ENCODE measurements at regions of chr12 and their contacts with region 1.

Region 1: DNA sequence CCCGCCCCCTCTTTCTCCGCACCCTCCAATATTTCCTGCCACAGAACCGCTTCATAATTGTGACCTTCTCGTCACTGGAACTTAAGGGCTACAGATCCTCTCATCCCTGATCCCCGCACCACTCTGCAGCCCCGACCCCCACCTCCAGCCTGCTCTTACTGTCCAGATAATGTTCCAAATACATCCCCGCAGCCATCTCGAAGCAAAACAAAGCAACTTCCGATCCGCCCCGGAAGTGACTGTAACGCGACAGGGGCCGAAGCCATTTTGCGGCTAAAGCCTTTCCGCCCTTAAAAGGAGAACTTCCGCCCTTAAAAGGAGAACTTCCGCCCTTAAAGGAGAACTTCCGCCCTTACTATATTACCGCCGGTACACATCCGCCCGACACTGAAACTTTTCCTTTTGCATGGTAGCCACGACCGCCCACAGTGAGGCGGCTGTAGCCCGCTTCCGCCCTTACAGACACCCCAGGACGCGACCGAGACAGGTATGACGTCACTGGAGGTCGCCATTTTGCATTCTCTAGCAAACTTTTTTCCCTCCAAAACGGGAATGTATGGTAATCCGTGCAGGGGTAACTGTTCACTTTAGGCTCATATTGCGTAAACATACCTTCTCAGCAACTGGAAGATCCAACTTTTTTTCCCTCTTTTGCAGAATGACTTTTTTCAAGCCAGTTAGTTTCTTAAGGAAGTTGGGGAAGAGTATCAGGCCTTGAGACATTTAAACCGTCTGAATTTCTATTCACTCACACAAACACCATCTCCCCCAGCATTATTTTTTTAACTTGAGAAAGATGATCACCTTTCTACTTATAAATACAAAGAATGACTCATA is at the start of gene ING4:
- DNase-seq: peak; percentile 98 to 99
- H3K4me3 ChIP-seq: peak within 1 kb of the TSS; percentile 63
- H3K27ac ChIP-seq: peak within 1 kb of the TSS; percentile 58
- H3K4me1 ChIP-seq: peaks cover 8% of the 10 kb centered on the region
- H3K27me3 ChIP-seq: no peaks in the 10 kb centered on the region
- CTCF ChIP-seq: no peak
- total RNA-seq, gene ING4: 87.6 and 88.7 TPM in 2 replicates

Region 2: DNA sequence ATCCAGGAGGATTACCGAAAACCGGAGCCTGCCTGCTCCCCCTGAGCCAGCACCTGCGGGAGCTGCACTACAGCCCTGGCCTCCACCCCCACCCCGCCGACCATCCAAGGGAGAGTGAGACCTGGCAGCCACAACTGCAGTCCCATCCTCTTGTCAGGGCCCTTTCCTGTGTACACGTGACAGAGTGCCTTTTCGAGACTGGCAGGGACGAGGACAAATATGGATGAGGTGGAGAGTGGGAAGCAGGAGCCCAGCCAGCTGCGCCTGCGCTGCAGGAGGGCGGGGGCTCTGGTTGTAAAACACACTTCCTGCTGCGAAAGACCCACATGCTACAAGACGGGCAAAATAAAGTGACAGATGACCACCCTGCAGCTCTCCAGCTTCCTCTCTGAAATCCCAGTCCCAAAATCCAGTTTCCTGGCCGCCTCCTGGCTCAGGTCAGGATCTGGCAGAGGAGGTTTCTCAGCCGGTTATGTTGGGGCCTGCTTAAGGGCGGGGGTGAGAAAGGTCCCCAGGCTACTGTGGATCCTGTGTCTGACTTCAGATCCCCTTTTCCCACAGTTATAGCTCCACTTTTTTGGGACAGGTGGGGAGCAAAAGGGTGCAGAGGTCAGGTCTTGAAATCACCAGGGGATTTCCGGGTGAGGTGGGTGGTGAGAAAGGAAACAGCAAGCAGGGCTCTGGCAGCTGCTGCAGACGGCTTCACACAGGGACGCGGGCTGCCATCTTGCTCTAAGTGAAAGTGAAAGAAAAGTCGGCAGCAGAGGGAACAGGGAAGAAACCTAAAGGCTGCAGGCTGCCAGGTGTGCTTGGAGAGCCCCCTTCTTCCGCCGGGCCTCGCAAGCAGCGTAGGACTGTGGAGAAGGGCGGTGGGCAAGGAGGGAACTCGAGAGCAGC is 211.5 kb before region 1 on chr12 and contains the start of gene TAPBPL:
- CTCF ChIA-PET with region 1: no interaction called
- POLR2A ChIA-PET with region 1: no interaction called
- intact Hi-C with region 1: no loop called
- DNase-seq: peak; percentile 70 to 85
- H3K4me3 ChIP-seq: peak within 1 kb of the TSS; percentile 63
- H3K27ac ChIP-seq: peak within 1 kb of the TSS; percentile 52
- H3K4me1 ChIP-seq: peaks cover 13% of the 10 kb centered on the region
- H3K27me3 ChIP-seq: no peaks in the 10 kb centered on the region
- CTCF ChIP-seq: no peak
- total RNA-seq, gene TAPBPL: 26.0 and 27.8 TPM in 2 replicates

Region 3: GRCh38 chr12:6632026-6632983 is 30.8 kb before region 1 on chr12:
- CTCF ChIA-PET with region 1: no interaction called
- POLR2A ChIA-PET with region 1: interaction called, 3 read pairs
- intact Hi-C with region 1: loop called (anchors 1 kb)
- DNase-seq: peak in 1 of 2 experiments; percentile 17
- H3K4me3 ChIP-seq: no peak overlapping the region
- H3K27ac ChIP-seq: no peak overlapping the region
- H3K4me1 ChIP-seq: peaks cover 22% of the 10 kb centered on the region
- H3K27me3 ChIP-seq: no peaks in the 10 kb centered on the region
- CTCF ChIP-seq: no peak

Region 4: DNA sequence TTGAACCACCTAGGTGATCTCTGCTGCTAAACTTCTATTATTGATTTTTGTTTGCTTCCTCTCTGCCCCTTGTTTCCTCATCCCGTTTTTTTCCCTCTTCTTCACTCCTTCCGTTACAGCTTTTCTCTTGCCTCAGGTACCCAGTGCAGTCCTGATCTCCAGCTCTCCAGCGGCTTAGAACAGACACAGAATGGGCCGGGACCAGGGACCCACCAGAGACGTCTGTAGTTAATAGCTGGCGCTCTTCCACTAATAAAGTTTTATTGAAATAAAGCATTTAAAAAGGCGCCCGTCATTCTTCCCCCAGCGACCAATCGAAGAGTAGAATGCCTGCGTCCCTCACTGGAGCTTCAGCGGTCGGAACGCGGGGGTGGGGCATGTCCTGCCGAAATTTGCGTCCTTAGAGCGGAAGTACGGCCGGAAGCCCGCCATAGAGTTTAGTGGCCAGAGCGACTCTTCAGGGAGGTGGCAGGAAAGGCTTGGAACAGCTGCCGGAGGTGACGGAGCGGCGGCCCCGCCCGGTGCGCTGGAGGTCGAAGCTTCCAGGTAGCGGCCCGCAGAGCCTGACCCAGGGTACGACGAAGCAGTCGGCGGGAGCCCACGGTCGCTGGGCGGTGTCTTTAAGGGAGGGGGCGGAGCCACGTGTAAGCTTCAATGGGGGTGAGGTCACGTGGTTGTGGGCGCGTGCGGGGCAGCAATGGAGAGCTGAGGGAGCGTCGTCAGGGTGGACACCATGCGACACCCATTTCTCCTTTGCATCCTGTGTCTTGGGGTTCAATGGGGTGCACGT is 60.7 kb after region 1 on chr12 and contains the start of gene COPS7A:
- CTCF ChIA-PET with region 1: no interaction called
- POLR2A ChIA-PET with region 1: no interaction called
- intact Hi-C with region 1: loop called (anchors 1 kb)
- DNase-seq: peak; percentile 98 to 100
- H3K4me3 ChIP-seq: peak within 1 kb of the TSS; percentile 77
- H3K27ac ChIP-seq: peak within 1 kb of the TSS; percentile 60
- H3K4me1 ChIP-seq: peaks cover 19% of the 10 kb centered on the region
- H3K27me3 ChIP-seq: no peaks in the 10 kb centered on the region
- CTCF ChIP-seq: no peak
- total RNA-seq, gene COPS7A: 88.7 and 116 TPM in 2 replicates